ENCODE measurements at regions of chr14 and their contacts with region 1.

Region 1: GRCh38 chr14:44897045-44897844 is 64.5 kb downstream of the KLHL28 start:
- DNase-seq: peak; percentile 97
- ATAC-seq: peak; percentile 92
- H3K4me3 ChIP-seq: peak overlapping the region; percentile 96
- H3K27ac ChIP-seq: peak overlapping the region; percentile 98
- H3K4me1 ChIP-seq: peaks cover 8% of the 10 kb centered on the region
- H3K27me3 ChIP-seq: no peaks in the 10 kb centered on the region
- CTCF ChIP-seq: no peak
- POLR2A ChIP-seq: peak; percentile 85
- RAD21 ChIP-seq: no peak

Region 2: DNA sequence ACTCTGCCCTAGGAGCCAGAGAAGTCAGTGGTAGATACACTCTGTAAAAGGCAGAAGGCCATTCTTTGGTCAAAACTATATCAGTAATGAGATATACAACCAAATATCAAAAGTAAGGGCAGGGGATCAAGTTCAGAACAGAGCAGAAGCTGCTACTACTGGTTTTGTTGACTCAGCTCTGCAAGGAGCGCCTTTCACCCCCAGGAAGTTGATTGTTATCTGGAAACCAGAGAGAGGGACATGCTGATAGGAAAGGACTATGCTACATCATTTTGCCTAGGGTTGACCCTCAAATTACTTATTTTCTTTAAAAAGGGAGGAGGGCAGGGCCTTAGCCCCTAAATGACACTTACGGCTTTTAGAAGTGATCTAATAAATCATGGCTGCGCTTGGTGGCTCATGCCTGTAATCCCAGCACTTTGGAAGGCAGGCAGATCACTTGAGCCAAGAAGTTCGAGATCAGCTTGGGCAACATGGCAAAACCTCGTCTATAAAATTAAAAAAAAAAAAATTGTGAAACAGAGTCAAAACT is 129.5 kb before region 1 on chr14:
- CTCF ChIA-PET with region 1: no interaction called
- POLR2A ChIA-PET with region 1: interaction called, 15 read pairs
- dilution Hi-C with region 1: no loop called
- in situ Hi-C with region 1: no loop called
- intact Hi-C with region 1: no loop called
- DNase-seq: no peak
- ATAC-seq: no peak
- H3K4me3 ChIP-seq: no peak overlapping the region
- H3K27ac ChIP-seq: no peak overlapping the region
- H3K4me1 ChIP-seq: no peaks in the 10 kb centered on the region
- H3K27me3 ChIP-seq: no peaks in the 10 kb centered on the region
- CTCF ChIP-seq: no peak
- POLR2A ChIP-seq: no peak
- RAD21 ChIP-seq: no peak

Region 3: GRCh38 chr14:45144658-45145057 is 247.4 kb after region 1 on chr14:
- CTCF ChIA-PET with region 1: no interaction called
- POLR2A ChIA-PET with region 1: no interaction called
- dilution Hi-C with region 1: no loop called
- in situ Hi-C with region 1: no loop called
- intact Hi-C with region 1: no loop called
- DNase-seq: no peak
- ATAC-seq: no peak
- H3K4me3 ChIP-seq: no peak overlapping the region
- H3K27ac ChIP-seq: no peak overlapping the region
- H3K4me1 ChIP-seq: no peaks in the 10 kb centered on the region
- H3K27me3 ChIP-seq: no peaks in the 10 kb centered on the region
- CTCF ChIP-seq: no peak
- POLR2A ChIP-seq: no peak
- RAD21 ChIP-seq: no peak